ENCODE measurements at regions of chr11 and their contacts with region 1.

Region 1: DNA sequence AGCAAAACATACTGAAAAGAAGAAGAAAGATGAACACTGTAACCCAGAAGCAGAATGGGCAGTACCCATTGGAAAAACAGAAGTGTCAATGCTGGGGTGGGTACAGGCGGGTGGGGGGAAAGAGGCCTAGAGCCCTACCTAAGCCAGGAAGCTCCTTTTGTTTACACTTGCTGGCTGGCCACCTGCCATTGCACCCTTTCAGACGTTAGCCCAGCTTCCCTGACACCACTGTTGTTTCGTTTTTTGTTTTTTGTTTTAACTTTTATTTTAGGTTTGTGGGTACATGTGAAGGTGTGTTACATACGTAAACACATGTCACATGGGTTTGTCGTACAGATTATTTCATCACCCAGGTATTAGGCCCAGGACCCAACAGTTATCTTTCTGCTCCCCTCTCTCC is 55.4 kb downstream of the PLEKHA7 start:
- DNase-seq: no peak
- H3K4me3 ChIP-seq: no peak overlapping the region
- H3K27ac ChIP-seq: no peak overlapping the region
- H3K4me1 ChIP-seq: peaks cover 82% of the 10 kb centered on the region
- H3K27me3 ChIP-seq: no peaks in the 10 kb centered on the region
- CTCF ChIP-seq: no peak

Region 2: GRCh38 chr11:16184588-16184987 is 774.2 kb before region 1 on chr11:
- CTCF ChIA-PET with region 1: no interaction called
- POLR2A ChIA-PET with region 1: no interaction called
- intact Hi-C with region 1: no loop called
- DNase-seq: peak; percentile 0 to 70
- H3K4me3 ChIP-seq: no peak overlapping the region
- H3K27ac ChIP-seq: peak overlapping the region; percentile 26; the same call in 1 of the 2 replicates
- H3K4me1 ChIP-seq: peaks cover 12% of the 10 kb centered on the region; the same call in 1 of the 2 replicates
- H3K27me3 ChIP-seq: no peaks in the 10 kb centered on the region
- CTCF ChIP-seq: no peak

Region 3: GRCh38 chr11:16977136-16977988 is 18.5 kb after region 1 on chr11:
- CTCF ChIA-PET with region 1: no interaction called
- POLR2A ChIA-PET with region 1: interaction called, 5 read pairs
- intact Hi-C with region 1: loop called (anchors 1 kb)
- DNase-seq: no peak
- H3K4me3 ChIP-seq: no peak overlapping the region
- H3K27ac ChIP-seq: no peak overlapping the region
- H3K4me1 ChIP-seq: peaks cover 54% of the 10 kb centered on the region
- H3K27me3 ChIP-seq: no peaks in the 10 kb centered on the region
- CTCF ChIP-seq: no peak

Region 4: DNA sequence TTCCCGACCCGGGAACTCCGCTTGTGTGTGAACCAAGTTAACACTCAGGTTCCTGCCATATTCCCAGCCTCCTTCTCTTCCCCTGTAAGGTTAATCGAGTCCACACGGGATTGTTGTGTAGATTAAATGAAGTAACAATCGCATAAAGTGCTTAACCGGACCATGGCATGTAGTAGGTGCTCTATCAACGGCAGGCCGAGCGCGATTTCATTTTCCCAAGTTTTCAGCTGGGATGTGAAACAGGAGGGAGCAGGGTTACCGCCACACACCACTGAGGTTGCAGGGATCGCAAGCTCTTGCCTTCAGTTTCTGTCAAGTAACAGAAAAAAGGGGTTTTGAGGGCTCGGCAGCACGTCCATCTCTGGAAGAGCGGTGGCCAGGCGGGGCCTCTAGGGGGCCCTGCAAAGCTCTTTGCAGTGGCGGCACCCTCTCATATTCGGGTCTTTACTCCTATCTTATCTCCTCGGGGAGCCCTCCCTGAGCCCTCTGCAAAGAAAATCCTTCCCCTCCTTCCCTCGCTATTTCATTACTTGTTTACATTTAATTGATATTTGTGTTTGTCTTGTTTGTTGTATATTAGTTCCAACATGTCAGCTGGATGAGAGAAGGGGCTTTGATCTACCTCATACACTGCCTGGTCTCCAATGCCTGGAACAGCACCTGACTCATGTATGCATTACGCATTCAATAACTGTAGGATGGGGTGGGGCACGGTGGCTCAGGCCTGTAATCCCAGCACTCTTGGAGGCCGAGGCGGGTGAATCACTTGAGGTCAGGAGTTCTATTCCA is 56.2 kb after region 1 on chr11:
- CTCF ChIA-PET with region 1: no interaction called
- POLR2A ChIA-PET with region 1: no interaction called
- intact Hi-C with region 1: loop called (anchors 2 kb)
- DNase-seq: peak; percentile 57 to 88
- H3K4me3 ChIP-seq: peak overlapping the region; percentile 89
- H3K27ac ChIP-seq: peak overlapping the region; percentile 70
- H3K4me1 ChIP-seq: peaks cover 60% of the 10 kb centered on the region
- H3K27me3 ChIP-seq: no peaks in the 10 kb centered on the region
- CTCF ChIP-seq: peak; percentile 71

Region 5: GRCh38 chr11:17026487-17027082 is 67.8 kb after region 1 on chr11:
- CTCF ChIA-PET with region 1: no interaction called
- POLR2A ChIA-PET with region 1: no interaction called
- intact Hi-C with region 1: no loop called
- DNase-seq: no peak
- H3K4me3 ChIP-seq: no peak overlapping the region
- H3K27ac ChIP-seq: no peak overlapping the region
- H3K4me1 ChIP-seq: no peaks in the 10 kb centered on the region
- H3K27me3 ChIP-seq: no peaks in the 10 kb centered on the region
- CTCF ChIP-seq: no peak

Region 6: GRCh38 chr11:17207317-17208258 is 248.8 kb after region 1 on chr11 and contains the start of gene PIK3C2A:
- CTCF ChIA-PET with region 1: no interaction called
- POLR2A ChIA-PET with region 1: no interaction called
- intact Hi-C with region 1: loop called (anchors 10 kb)
- DNase-seq: peak; percentile 90 to 95
- H3K4me3 ChIP-seq: peak within 1 kb of the TSS; percentile 72
- H3K27ac ChIP-seq: peak within 1 kb of the TSS; percentile 95
- H3K4me1 ChIP-seq: peaks cover 26% of the 10 kb centered on the region
- H3K27me3 ChIP-seq: no peaks in the 10 kb centered on the region
- CTCF ChIP-seq: no peak
- total RNA-seq, gene PIK3C2A: 53.8 and 70.7 TPM in 2 replicates

Measured in PC-9 (cell line).